PC-9 (cell line): ENCODE measurements at regions of chr20 and their contacts with region 1.

Region 1: GRCh38 chr20:25584905-25585704 is at the start of gene NINL:
- DNase-seq: peak; percentile 51 to 80
- H3K4me3 ChIP-seq: peak within 1 kb of the TSS; percentile 94
- H3K27ac ChIP-seq: no peak within 1 kb of the TSS
- H3K4me1 ChIP-seq: peaks cover 11% of the 10 kb centered on the region; the same call in 1 of the 2 replicates
- H3K27me3 ChIP-seq: no peaks in the 10 kb centered on the region
- CTCF ChIP-seq: no peak
- total RNA-seq, gene NINL: 19.6 and 39.9 TPM in 2 replicates

Region 2: GRCh38 chr20:25496968-25497640 is 88.0 kb before region 1 on chr20:
- CTCF ChIA-PET with region 1: no interaction called
- POLR2A ChIA-PET with region 1: no interaction called
- intact Hi-C with region 1: loop called (anchors 10 kb)
- DNase-seq: peak; percentile 91 to 92
- H3K4me3 ChIP-seq: no peak overlapping the region
- H3K27ac ChIP-seq: no peak overlapping the region
- H3K4me1 ChIP-seq: peaks cover 13% of the 10 kb centered on the region
- H3K27me3 ChIP-seq: no peaks in the 10 kb centered on the region
- CTCF ChIP-seq: no peak

Region 3: GRCh38 chr20:25553819-25554296 is 31.2 kb before region 1 on chr20:
- CTCF ChIA-PET with region 1: no interaction called
- POLR2A ChIA-PET with region 1: interaction called, 26 read pairs
- intact Hi-C with region 1: no loop called
- DNase-seq: no peak
- H3K4me3 ChIP-seq: no peak overlapping the region
- H3K27ac ChIP-seq: no peak overlapping the region
- H3K4me1 ChIP-seq: peaks cover 18% of the 10 kb centered on the region
- H3K27me3 ChIP-seq: no peaks in the 10 kb centered on the region
- CTCF ChIP-seq: no peak